ENCODE measurements at regions of chr18 and their contacts with region 1.

Region 1: DNA sequence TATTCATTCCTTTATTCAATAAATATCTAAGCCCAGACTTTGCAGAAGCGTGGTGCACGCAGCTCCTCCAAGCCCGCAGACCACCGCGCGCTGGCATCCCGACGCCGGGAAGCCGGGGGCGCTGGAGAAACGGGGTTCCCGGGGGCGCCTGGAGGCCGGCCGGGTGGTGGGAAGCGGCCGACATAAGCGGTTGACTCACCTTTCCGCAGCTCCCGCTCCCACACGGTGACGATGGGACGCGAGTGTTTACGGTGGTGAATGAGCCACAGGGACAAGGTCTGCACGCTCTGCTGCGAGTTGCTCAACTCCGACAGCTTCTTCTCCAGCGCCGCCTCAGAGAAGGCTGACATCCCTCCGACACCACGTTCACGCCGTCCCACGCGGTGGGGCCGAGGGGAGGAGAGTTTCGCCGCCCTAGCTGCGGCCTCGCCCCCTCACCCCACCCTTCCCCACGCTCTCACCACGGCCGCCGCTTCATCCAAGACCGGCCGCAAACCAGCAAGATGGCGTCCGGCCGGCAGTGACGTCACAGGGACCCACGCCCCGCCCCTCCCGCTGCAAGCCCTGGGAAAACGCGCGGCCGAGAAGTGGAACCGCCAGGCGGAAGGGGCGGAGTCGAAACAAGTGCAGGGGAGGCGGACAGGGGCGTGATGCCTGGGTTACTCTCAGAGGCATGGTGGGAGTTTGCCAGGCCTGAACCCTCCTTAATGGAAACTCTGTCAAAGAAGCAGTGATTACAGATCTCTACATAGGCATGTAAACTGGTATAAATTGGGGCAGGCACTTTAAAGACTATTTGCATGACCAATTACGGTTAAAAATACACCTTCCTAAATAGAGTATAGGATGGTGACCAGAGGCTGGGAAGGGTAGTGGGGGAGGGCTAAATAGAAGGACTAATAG is at the start of gene RPRD1A:
- DNase-seq: peak; percentile 99
- ATAC-seq: peak; percentile 96
- H3K4me3 Mint-ChIP-seq: peak within 1 kb of the TSS; percentile 78
- H3K27ac Mint-ChIP-seq: peak within 1 kb of the TSS; percentile 89
- H3K4me1 Mint-ChIP-seq: peaks cover 29% of the 10 kb centered on the region
- H3K27me3 Mint-ChIP-seq: peaks cover 3% of the 10 kb centered on the region
- total RNA-seq, gene RPRD1A: 27.9 to 32.1 TPM

Region 2: DNA sequence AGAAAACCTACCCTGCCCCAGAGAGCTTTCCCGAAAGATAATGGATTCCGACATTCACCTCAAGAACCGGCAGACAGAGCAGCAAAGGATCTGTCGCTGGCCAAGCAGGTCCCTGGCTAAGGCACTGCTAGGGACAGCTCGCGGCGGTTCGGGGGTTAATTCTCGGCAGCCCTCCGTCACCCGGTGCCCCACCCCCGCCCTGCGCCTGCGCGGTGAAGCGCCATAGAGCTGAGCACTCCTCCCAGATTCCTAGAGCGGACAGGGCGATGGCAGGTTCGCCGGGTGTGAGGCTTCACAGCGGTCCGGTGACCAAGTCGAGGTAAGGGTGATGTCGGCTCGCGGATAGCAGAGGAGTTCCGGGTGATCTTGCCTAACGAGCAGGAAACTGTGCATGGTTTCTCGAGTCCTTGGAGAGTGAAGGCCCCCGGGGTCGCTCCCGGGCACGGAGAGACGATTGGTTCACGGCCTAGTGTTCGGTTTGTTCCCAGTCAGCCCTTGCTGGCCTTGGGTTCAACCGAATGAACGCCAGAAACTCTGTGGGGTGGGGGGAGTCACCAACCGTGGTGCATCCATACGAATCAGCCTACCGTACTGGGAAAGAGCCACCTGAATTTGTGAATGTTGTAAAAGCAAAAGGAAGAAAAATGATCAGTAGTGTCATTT is 777.1 kb before region 1 on chr18 and contains the start of gene ZSCAN30:
- CTCF ChIA-PET with region 1: no interaction called
- POLR2A ChIA-PET with region 1: no interaction called
- intact Hi-C with region 1: loop called in 1 of 2 experiments (anchors 5 kb)
- DNase-seq: peak; percentile 97
- ATAC-seq: peak; percentile 97
- H3K4me3 Mint-ChIP-seq: peak within 1 kb of the TSS; percentile 96
- H3K27ac Mint-ChIP-seq: peak within 1 kb of the TSS; percentile 96
- H3K4me1 Mint-ChIP-seq: peaks cover 45% of the 10 kb centered on the region
- H3K27me3 Mint-ChIP-seq: no peaks in the 10 kb centered on the region
- total RNA-seq, gene ZSCAN30: 24.2 to 25.4 TPM

Region 3: GRCh38 chr18:35484034-35484433 is 583.3 kb before region 1 on chr18:
- CTCF ChIA-PET with region 1: no interaction called
- POLR2A ChIA-PET with region 1: no interaction called
- intact Hi-C with region 1: loop called in 1 of 2 experiments (anchors 1 kb)
- DNase-seq: no peak
- ATAC-seq: peak; percentile 95
- H3K4me3 Mint-ChIP-seq: no peak overlapping the region
- H3K27ac Mint-ChIP-seq: no peak overlapping the region
- H3K4me1 Mint-ChIP-seq: peaks cover 47% of the 10 kb centered on the region
- H3K27me3 Mint-ChIP-seq: no peaks in the 10 kb centered on the region

Region 4: GRCh38 chr18:35616664-35617423 is 450.5 kb before region 1 on chr18:
- CTCF ChIA-PET with region 1: no interaction called
- POLR2A ChIA-PET with region 1: no interaction called
- intact Hi-C with region 1: loop called in 1 of 2 experiments (anchors 2 kb)
- DNase-seq: peak; percentile 81
- ATAC-seq: peak; percentile 94
- H3K4me3 Mint-ChIP-seq: no peak overlapping the region
- H3K27ac Mint-ChIP-seq: no peak overlapping the region
- H3K4me1 Mint-ChIP-seq: peaks cover 16% of the 10 kb centered on the region
- H3K27me3 Mint-ChIP-seq: no peaks in the 10 kb centered on the region

Region 5: DNA sequence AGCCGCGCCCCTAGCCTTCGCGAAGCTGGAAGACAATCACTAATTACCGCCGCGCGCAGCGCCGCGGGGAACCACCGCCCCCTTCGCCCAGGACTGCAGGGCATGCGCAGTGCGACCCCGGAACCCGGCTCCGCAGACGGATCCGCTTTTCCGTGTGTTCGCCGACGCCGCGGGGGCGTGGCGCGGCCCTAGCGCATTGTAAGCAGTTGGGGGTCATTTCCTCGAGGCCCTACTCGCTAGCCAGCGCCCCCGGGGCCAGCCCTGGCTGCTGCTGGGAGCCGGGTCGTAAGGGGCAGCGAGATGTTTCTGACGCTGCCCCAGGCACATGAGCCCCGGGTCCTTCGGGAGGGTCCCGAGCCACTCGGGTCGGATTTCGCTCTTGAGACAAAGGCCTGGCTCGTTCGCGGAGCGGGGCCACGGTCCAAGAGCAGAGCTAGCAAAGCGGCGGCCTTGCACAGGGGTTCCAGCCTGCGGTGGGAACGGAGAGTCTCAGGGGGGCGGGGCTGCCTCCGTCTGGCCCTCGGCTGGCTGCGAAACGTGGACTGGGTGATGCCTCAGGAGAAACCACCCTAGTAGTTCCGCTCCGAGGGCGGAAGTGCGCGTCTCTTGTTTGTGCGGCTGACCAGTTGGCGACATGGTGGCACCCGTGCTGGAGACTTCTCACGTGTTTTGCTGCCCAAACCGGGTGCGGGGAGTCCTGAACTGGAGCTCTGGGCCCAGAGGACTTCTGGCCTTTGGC is 62.2 kb after region 1 on chr18 and contains the starts of genes ELP2 and SLC39A6:
- CTCF ChIA-PET with region 1: interaction called, 3 read pairs
- POLR2A ChIA-PET with region 1: interaction called, 7 read pairs
- intact Hi-C with region 1: loop called (anchors 1 kb)
- DNase-seq: peak; percentile 97
- ATAC-seq: peak; percentile 94
- H3K4me3 Mint-ChIP-seq: peak within 1 kb of the TSS; percentile 92
- H3K27ac Mint-ChIP-seq: peak within 1 kb of the TSS; percentile 95
- H3K4me1 Mint-ChIP-seq: peaks cover 57% of the 10 kb centered on the region
- H3K27me3 Mint-ChIP-seq: no peaks in the 10 kb centered on the region
- total RNA-seq, gene ELP2: 76.5 to 114 TPM
- total RNA-seq, gene SLC39A6: 23.9 to 28.6 TPM

Region 6: DNA sequence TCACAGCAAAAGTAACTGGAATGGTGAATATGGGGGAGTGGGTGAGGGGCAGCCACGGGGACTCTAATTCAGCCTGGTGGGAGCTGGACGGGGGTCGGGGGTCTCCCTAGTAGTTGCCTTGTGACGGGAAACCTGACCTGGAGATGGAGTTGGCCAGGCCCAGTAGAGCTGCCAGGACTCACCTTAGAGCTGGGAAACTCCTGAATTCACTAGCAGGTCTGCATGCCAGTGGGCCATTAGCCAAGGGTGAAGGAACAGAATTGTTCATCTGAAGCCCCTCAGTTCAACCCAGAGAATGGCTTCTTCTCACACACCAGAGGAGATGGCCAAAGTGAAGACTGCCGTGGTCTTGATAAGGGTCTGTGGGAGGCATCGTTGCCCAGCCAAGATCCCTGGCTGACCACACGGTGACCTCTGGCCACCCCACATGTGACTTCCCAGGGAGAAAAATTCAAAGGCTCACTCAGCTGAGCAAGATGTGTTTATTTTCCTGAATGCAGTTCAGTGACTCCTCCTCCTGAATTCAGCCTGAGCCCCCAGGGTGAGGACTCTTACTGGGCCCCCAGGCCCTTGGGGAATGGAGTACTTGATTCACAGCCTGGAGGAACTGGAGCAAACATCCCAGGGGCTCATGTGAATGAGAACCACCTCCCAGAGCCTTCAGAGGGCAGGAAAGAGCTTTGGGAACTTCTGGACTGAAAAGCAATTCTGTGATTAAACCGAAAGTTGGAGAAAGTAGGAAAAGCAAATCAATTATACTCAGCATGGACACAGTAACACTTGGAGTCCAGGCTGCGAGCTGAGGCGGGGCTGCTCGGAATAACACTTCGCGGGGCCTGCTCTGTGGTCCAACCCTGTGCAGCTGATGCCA is 145.2 kb after region 1 on chr18:
- CTCF ChIA-PET with region 1: no interaction called
- POLR2A ChIA-PET with region 1: no interaction called
- intact Hi-C with region 1: no loop called
- DNase-seq: no peak
- ATAC-seq: no peak
- H3K4me3 Mint-ChIP-seq: no peak overlapping the region
- H3K27ac Mint-ChIP-seq: no peak overlapping the region
- H3K4me1 Mint-ChIP-seq: no peaks in the 10 kb centered on the region
- H3K27me3 Mint-ChIP-seq: no peaks in the 10 kb centered on the region